Activated CD8-positive, alpha-beta T cell treated with anti-CD3 and anti-CD28 coated beads for 36 hours (primary cell): ENCODE measurements at regions of chr19 and their contacts with region 1.

Region 1: DNA sequence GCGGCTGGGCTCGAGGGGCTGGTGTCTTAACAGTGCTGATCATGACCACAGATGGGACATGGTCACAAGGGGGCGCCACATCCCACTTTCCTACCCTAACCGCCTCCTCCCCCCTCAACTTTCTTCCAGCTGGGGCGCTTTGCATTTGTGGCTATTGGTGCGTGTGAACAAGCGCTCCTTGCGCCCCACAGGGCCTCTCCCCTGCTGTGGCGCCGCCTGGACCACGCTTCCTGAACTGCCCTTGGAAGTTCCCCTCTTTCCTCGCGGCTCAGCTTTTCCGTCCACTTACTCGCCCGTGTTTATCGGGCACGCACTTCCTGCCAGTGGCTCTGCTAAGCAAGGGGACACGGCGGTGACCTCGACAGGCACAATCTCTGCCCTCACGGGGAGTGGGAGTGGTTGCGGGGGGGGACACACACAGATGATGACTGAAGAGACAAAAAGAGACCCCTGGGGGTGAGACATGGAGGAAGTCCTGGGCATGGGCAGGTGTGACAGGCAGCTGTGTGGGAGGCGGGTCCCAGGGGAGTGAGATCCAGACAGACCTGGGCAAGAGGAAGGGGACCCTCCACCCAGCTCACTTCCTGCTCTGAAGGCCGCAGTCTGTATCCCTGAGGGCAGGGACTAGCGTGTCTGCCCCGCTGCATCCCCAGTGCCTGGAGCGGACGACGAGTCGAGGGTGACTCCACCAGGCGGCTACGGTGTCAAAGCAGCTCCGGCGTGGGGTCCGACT is 40.3 kb downstream of the ZNF787 start:
- DNase-seq: peak; percentile 90
- ATAC-seq: peak; percentile 86
- H3K4me3 Mint-ChIP-seq: peak overlapping the region; percentile 48
- H3K27ac Mint-ChIP-seq: no peak overlapping the region
- H3K4me1 Mint-ChIP-seq: peaks cover 10% of the 10 kb centered on the region
- H3K27me3 Mint-ChIP-seq: peaks cover 13% of the 10 kb centered on the region
- CTCF ChIP-seq: peak; percentile 23

Region 2: GRCh38 chr19:56117889-56118288 is 37.1 kb after region 1 on chr19:
- CTCF ChIA-PET with region 1: no interaction called
- POLR2A ChIA-PET with region 1: no interaction called
- intact Hi-C with region 1: no loop called
- DNase-seq: no peak
- ATAC-seq: no peak
- H3K4me3 Mint-ChIP-seq: no peak overlapping the region
- H3K27ac Mint-ChIP-seq: peak overlapping the region; percentile 25
- H3K4me1 Mint-ChIP-seq: peaks cover 44% of the 10 kb centered on the region
- H3K27me3 Mint-ChIP-seq: no peaks in the 10 kb centered on the region
- CTCF ChIP-seq: no peak

Region 3: DNA sequence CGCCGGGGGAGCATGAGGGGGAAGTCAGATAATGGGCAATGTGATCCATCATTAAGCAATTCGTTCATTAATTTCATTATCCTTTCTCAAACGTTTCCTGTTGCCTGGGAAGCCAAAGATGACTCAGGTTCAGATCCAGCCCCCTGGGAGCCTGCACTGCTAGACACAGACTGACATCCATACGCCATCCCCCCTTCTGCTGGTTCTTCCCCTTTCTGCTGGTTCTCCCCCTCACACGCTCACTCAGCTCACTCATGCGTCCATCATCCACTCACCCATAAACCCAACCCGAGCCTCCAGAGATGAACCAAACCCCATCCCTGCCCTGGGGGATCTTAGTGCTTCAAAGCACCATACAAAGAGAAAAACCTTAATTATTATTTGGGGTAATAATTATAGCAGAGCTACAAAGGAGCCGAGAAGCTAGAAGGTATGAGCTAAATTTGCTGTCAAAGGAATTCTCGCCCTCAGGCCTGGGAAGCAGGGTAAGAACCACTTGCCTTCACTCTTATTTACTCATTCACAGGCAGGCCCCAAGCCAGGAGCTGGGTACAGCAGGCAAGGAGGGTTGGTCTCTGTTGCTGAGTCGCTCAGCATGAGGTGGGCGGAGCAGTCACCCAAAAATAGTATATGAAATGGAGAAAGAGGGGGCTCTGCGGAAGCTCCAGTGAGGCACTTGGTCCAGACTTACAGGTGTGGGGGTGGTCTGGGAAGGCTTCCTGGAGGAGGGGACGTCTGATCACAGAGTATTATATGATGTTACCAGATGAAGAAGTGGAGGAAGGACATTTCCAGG is 53.2 kb after region 1 on chr19:
- CTCF ChIA-PET with region 1: no interaction called
- POLR2A ChIA-PET with region 1: no interaction called
- intact Hi-C with region 1: no loop called
- DNase-seq: no peak
- ATAC-seq: no peak
- H3K4me3 Mint-ChIP-seq: no peak overlapping the region
- H3K27ac Mint-ChIP-seq: no peak overlapping the region
- H3K4me1 Mint-ChIP-seq: peaks cover under 1% of the 10 kb centered on the region
- H3K27me3 Mint-ChIP-seq: no peaks in the 10 kb centered on the region
- CTCF ChIP-seq: no peak

Region 4: DNA sequence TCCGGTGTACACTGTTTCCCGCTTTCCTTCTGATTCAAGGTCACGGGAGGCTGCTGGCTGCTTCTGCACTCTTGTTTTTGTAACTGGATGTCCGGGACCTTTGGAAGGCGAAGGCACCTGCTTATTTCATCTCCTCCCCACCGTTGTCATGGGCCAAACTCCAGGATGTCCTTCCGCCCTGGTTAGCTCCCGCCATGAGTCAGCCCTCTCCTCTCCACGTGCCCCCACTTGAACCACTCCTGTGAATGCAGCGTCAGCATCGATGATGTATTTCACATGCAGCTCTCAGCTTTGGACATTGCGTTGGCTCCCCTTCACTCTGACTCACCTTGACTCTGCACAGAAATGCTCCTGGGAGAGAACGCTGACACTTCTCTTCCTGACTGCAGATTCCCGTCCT is 89.4 kb after region 1 on chr19:
- CTCF ChIA-PET with region 1: interaction called, 24 read pairs
- POLR2A ChIA-PET with region 1: no interaction called
- intact Hi-C with region 1: no loop called
- DNase-seq: no peak
- ATAC-seq: no peak
- H3K4me3 Mint-ChIP-seq: no peak overlapping the region
- H3K27ac Mint-ChIP-seq: no peak overlapping the region
- H3K4me1 Mint-ChIP-seq: peaks cover 3% of the 10 kb centered on the region
- H3K27me3 Mint-ChIP-seq: peaks cover 4% of the 10 kb centered on the region
- CTCF ChIP-seq: no peak

Region 5: DNA sequence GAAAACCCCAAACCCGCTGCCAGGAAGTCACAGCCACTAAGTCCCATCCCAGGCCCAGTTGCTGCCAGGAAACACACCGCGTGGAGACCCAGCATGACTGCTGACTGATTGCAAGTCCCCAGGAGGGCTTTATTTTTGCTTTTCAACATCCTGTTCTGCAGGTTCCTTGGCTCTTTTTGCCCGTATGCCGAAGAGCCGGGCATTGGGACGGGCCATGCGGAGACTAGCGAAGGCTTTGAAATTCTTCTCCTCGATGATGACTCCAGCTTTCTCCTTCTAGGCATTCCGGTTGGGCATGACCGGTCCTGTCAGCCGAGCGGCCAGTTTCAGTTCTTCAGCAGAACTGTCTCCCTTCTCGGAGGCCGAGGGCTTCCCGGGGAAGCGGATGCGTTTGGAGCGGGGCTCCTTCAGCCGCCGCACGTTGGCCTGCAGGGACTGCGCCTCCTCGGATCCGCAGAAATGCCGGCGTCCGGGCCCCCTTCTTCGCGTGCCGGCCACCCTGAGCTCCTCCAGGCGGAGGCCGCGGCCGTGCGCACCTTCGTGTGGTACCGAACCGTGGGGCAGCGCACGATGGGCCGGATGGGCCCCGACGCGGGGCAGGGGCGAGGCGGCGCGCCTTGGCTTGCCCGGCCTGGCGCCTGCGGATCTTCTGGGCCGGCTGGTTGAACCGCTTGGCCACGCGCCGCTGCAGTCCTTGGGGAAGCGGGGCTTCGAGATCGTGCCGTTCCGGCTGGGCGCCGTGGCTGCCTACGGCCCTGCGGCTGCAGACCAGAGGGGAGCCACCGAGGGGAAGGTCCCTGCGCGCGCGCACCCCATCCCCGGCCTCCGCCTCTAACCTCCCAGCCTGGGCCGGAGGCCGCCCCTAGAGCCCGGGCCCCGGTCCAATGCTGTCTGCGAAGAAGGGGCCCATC is 136.5 kb after region 1 on chr19:
- CTCF ChIA-PET with region 1: no interaction called
- POLR2A ChIA-PET with region 1: no interaction called
- intact Hi-C with region 1: no loop called
- DNase-seq: no peak
- ATAC-seq: no peak
- H3K4me3 Mint-ChIP-seq: no peak overlapping the region
- H3K27ac Mint-ChIP-seq: no peak overlapping the region
- H3K4me1 Mint-ChIP-seq: no peaks in the 10 kb centered on the region
- H3K27me3 Mint-ChIP-seq: peaks cover 18% of the 10 kb centered on the region
- CTCF ChIP-seq: no peak

Region 6: GRCh38 chr19:56333505-56333904 is 252.7 kb after region 1 on chr19:
- CTCF ChIA-PET with region 1: interaction called, 18 read pairs
- POLR2A ChIA-PET with region 1: no interaction called
- intact Hi-C with region 1: no loop called
- DNase-seq: peak; percentile 61
- ATAC-seq: peak; percentile 62
- H3K4me3 Mint-ChIP-seq: no peak overlapping the region
- H3K27ac Mint-ChIP-seq: no peak overlapping the region
- H3K4me1 Mint-ChIP-seq: no peaks in the 10 kb centered on the region
- H3K27me3 Mint-ChIP-seq: no peaks in the 10 kb centered on the region
- CTCF ChIP-seq: peak; percentile 60

Region 7: DNA sequence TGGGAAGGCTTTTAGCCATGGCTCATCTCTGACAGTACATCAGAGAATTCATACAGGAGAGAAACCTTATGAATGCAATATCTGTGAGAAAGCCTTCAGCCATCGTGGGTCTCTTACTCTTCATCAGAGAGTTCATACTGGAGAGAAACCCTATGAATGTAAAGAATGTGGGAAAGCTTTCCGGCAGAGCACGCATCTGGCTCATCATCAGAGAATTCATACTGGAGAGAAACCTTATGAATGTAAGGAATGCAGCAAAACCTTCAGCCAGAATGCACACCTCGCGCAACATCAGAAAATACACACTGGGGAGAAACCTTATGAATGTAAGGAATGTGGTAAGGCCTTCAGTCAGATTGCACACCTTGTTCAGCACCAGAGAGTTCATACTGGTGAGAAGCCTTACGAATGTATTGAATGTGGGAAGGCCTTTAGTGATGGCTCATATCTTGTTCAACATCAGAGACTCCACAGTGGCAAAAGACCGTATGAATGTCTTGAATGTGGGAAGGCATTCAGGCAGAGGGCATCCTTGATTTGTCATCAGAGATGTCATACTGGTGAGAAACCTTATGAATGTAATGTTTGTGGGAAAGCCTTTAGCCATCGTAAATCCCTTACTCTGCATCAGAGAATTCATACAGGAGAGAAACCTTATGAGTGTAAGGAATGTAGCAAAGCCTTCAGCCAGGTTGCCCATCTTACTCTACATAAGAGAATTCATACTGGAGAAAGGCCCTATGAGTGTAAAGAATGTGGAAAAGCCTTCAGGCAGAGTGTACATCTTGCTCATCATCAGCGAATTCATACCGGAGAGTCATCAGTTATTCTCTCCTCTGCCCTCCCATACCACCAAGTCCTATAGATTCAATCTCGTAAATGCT is 497.1 kb after region 1 on chr19:
- CTCF ChIA-PET with region 1: no interaction called
- POLR2A ChIA-PET with region 1: no interaction called
- intact Hi-C with region 1: no loop called
- DNase-seq: no peak
- ATAC-seq: no peak
- H3K4me3 Mint-ChIP-seq: no peak overlapping the region
- H3K27ac Mint-ChIP-seq: no peak overlapping the region
- H3K4me1 Mint-ChIP-seq: no peaks in the 10 kb centered on the region
- H3K27me3 Mint-ChIP-seq: no peaks in the 10 kb centered on the region
- CTCF ChIP-seq: no peak